Heart left ventricle (tissue), 16 donors: ENCODE measurements at regions of chr11 and their contacts with region 1.

Region 1: GRCh38 chr11:128195057-128195751 is 392.2 kb downstream of the ETS1 start:
- DNase-seq: no peak
- ATAC-seq: peak; percentile 54 to 81 (median 60)
- H3K4me3 ChIP-seq: no peak overlapping the region
- H3K27ac ChIP-seq: no peak overlapping the region
- H3K4me1 ChIP-seq: peaks cover 0 to 18% (median 2%) of the 10 kb centered on the region in 12 donors
- H3K27me3 ChIP-seq: no peaks in the 10 kb centered on the region
- CTCF ChIP-seq: peak in 2 of 12 donors; percentile 6 to 29
- POLR2A ChIP-seq: no peak

Region 2: DNA sequence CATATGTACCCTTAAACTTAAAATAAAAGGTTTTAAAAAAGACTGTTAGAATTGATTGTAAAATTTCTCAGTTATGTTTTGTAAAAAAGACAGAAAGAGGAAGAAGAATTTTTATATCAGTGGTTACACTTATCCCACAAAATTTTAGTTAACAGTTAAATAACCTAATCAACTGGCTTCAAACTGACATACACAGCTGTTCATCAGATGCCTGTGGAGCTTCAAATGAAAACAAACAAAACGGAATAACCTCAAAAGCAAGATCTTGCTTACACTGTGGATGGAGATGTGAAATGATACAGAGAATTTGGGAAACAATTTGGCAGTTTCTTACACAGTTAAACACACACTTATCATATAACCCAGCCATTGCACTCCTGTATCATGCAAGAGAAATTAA is 128.8 kb before region 1 on chr11:
- intact Hi-C with region 1: no loop called
- DNase-seq: no peak
- ATAC-seq: no peak
- H3K4me3 ChIP-seq: no peak overlapping the region
- H3K27ac ChIP-seq: no peak overlapping the region
- H3K4me1 ChIP-seq: no peaks in the 10 kb centered on the region
- H3K27me3 ChIP-seq: no peaks in the 10 kb centered on the region
- CTCF ChIP-seq: no peak
- POLR2A ChIP-seq: no peak

Region 3: GRCh38 chr11:128240546-128240945 is 45.3 kb after region 1 on chr11:
- intact Hi-C with region 1: loop called in 1 of 10 experiments (anchors 5 kb)
- DNase-seq: no peak
- ATAC-seq: no peak
- H3K4me3 ChIP-seq: no peak overlapping the region
- H3K27ac ChIP-seq: no peak overlapping the region
- H3K4me1 ChIP-seq: peaks cover 0 to 16% (median 0%) of the 10 kb centered on the region in 12 donors
- H3K27me3 ChIP-seq: no peaks in the 10 kb centered on the region
- CTCF ChIP-seq: no peak
- POLR2A ChIP-seq: no peak

Region 4: DNA sequence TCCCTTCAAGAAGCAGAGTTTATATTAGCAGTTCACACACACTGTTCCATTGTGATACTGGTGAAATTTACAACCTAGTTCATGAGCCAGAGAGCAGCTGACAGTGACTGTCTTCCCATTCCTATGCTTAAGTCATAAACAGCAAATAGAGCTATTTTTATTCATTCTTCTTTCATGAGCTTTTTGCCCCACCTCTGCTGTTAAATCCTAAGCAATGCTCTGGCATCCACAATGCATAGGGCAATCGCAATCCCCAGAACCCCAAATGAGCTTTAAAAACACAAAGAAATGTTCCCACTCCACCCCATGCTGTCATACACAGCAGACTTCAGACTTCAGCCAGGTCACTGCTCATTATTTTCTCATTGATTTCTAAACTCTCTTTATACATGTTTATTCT is 84.7 kb after region 1 on chr11:
- intact Hi-C with region 1: no loop called
- DNase-seq: no peak
- ATAC-seq: no peak
- H3K4me3 ChIP-seq: no peak overlapping the region
- H3K27ac ChIP-seq: no peak overlapping the region
- H3K4me1 ChIP-seq: no peaks in the 10 kb centered on the region
- H3K27me3 ChIP-seq: no peaks in the 10 kb centered on the region
- CTCF ChIP-seq: no peak
- POLR2A ChIP-seq: no peak